ENCODE measurements at regions of chr19 and their contacts with region 1.

Region 1: GRCh38 chr19:4524808-4525562 is 6.7 kb upstream of the PLIN4 start:
- DNase-seq: peak; percentile 32 to 40
- H3K4me3 ChIP-seq: no peak overlapping the region
- H3K27ac ChIP-seq: no peak overlapping the region
- H3K4me1 ChIP-seq: no peaks in the 10 kb centered on the region
- H3K27me3 ChIP-seq: no peaks in the 10 kb centered on the region
- CTCF ChIP-seq: peak; percentile 18 to 71 (median 36)
- POLR2A ChIP-seq: no peak

Region 2: DNA sequence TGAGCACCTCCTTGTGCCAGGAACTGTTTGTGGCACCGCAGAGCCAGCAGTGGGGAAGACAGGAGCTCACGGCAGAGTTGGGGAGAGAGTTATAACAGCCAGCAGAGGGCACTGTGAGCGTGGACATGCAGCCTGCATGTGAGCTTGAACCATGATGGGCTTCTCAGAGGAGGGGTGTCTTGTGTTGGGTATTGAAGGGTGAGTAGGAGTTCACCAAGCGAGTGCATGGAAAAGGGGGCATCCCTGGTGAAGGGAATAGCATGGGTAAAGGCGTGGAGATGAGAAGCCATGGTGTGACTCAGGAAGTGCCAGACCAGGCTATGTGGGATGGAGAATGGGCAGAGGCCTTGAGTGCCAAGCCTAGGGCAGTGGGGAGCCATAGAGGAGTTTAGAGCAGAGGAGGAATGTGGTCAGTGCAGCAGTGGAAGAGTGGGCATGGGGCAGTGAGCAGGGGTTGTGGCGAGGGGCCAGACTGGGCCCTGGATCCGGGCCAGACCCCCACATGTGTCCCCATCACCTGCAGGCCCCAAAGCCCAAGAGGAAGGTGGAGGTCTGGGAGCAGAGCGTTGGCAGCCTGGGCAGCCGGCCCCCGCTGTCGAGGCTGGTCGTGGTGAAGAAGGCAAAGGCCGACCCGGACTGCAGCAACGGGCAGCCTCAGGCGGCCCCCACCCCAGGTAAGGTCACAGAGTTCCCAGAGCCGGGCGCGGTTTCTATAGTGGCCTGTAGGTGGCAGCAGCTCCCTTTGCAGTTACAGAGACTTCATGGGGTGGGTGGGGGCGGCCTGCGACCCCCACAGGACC is 257.7 kb before region 1 on chr19:
- intact Hi-C with region 1: loop called (anchors 10 kb)
- DNase-seq: peak; percentile 37 to 39
- H3K4me3 ChIP-seq: no peak overlapping the region
- H3K27ac ChIP-seq: no peak overlapping the region
- H3K4me1 ChIP-seq: no peaks in the 10 kb centered on the region
- H3K27me3 ChIP-seq: no peaks in the 10 kb centered on the region
- CTCF ChIP-seq: peak; percentile 62 to 88 (median 80)
- POLR2A ChIP-seq: no peak